ENCODE measurements at regions of chr19 and their contacts with region 1.

Region 1: DNA sequence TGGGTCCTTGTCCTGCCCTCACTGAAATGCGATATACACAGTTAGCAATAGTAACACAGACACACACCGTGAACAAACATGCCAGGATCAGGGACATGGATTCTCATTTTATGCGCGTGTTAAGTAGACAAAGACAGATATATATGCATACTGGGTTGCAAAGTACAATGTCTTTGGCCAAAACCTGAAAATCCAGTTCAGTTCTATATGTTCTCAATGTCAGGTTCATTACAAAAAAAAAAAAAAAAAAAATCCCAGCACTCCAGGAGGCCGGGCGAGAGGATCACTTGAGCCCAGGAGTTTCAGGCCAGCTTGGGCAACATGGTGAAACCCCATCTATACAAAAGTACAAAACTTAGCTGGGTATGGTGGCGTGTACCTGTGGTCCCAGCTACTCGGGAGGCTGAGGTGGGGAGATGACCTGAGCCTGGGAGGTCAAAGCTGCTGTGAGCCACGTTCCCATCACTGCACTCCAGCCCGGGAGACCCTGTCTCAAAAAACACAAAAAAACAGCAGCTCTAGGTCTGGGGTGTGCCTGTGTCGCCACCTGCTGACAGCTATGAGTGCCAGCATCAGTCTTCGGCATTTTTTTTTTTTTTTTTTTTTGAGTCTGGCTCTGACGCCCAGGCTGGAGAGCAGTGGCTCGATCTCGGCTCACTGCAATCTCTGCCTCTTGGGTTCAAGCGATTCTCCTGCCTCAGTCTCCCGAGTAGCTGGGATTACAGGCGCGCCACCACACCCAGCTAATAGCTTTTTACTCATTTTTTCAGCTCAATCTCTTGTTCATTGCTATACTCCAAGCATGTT is 10.3 kb downstream of the AP2S1 start:
- DNase-seq: peak in 32 of 35 experiments; percentile 14 to 84 (median 44)
- ATAC-seq: peak; percentile 64 to 87 (median 72)
- H3K4me3 ChIP-seq: no peak overlapping the region
- H3K4me3 Mint-ChIP-seq: no peak overlapping the region
- H3K27ac ChIP-seq: no peak overlapping the region
- H3K27ac Mint-ChIP-seq: peak overlapping the region in 1 of 2 donors; percentile 23
- H3K4me1 ChIP-seq: peaks cover 0 to 7% of the 10 kb centered on the region in 2 experiments
- H3K4me1 Mint-ChIP-seq: peaks cover 0 to 6% (median 3%) of the 10 kb centered on the region in 3 donors
- H3K27me3 ChIP-seq: no peaks in the 10 kb centered on the region
- H3K27me3 Mint-ChIP-seq: no peaks in the 10 kb centered on the region

Region 2: DNA sequence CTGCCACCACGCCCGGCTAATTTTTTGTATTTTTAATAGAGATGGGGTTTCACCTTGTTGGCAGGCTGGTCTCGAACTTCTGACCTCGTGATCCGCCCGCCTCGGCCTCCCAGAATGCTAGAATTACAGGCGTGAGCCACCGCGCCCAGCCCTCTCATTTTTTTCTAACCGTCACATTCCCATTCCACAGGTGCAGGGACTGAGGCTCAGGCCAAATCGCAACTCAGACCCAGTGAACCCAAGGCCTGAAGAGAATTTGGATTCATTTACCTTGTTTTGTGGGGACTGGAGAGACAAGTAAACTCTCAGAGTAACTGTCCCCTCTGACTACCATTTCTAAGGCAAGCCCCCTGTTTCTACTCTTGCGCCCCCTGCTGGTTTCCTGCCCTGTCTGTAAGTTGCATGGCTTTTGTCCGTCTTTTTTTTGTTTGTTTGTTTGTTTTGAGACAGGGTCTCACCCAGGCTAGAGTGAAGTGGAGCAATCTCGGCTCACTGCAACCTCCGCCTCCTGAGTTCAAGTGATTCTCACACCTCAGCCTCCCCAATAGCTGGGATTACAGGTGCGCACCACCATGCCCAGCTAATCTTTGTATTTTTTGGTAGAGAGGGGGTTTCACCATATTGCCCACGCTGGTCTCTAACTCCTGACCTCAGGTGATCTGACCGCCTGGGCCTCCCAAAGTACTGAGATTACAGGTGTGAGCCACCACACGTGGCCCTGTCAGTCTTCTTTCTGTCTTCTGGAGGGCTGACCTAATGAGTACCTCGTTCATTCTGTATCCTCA is 91.8 kb before region 1 on chr19:
- CTCF ChIA-PET with region 1: interaction called in 1 of 2 experiments, 15 read pairs
- POLR2A ChIA-PET with region 1: no interaction called
- DNase-seq: peak in 34 of 35 experiments; percentile 35 to 81 (median 66)
- ATAC-seq: no peak
- H3K4me3 ChIP-seq: no peak overlapping the region
- H3K4me3 Mint-ChIP-seq: peak overlapping the region; percentile 67 to 83 (median 77)
- H3K27ac ChIP-seq: no peak overlapping the region
- H3K27ac Mint-ChIP-seq: peak overlapping the region; percentile 0 to 61
- H3K4me1 ChIP-seq: peaks cover 13 to 40% of the 10 kb centered on the region in 2 experiments
- H3K4me1 Mint-ChIP-seq: peaks cover 35 to 39% (median 37%) of the 10 kb centered on the region in 3 donors
- H3K27me3 ChIP-seq: no peaks in the 10 kb centered on the region
- H3K27me3 Mint-ChIP-seq: no peaks in the 10 kb centered on the region

Region 3: DNA sequence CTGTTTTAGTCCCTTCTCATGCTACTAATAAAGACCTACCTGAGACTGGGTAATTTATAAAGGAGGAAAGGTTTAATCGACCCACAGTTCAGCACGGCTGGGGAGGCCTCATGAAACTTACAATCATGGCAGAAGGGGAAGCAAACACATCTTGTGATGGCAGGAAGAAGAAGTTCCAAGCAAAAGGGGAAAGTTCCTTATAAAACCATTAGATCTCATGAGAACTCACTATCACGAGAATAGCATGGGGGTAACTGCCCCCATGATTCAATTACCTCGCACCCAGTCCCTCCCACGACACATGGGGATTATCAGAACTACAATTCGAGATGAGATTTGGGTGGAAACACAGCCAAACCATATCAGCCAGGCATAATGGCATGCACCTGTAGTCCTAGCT is 81.1 kb before region 1 on chr19:
- CTCF ChIA-PET with region 1: interaction called, 20 to 35 read pairs
- POLR2A ChIA-PET with region 1: interaction called in 1 of 2 experiments, 5 read pairs
- DNase-seq: no peak
- ATAC-seq: no peak
- H3K4me3 ChIP-seq: no peak overlapping the region
- H3K4me3 Mint-ChIP-seq: no peak overlapping the region
- H3K27ac ChIP-seq: no peak overlapping the region
- H3K27ac Mint-ChIP-seq: no peak overlapping the region
- H3K4me1 ChIP-seq: peaks cover 0 to 12% of the 10 kb centered on the region in 2 experiments
- H3K4me1 Mint-ChIP-seq: peaks cover 2 to 4% (median 4%) of the 10 kb centered on the region in 3 donors
- H3K27me3 ChIP-seq: no peaks in the 10 kb centered on the region
- H3K27me3 Mint-ChIP-seq: no peaks in the 10 kb centered on the region

Region 4: GRCh38 chr19:46821498-46822409 is 18.6 kb before region 1 on chr19:
- CTCF ChIA-PET with region 1: interaction called, 4 to 10 read pairs
- POLR2A ChIA-PET with region 1: interaction called in 1 of 2 experiments, 4 read pairs
- DNase-seq: peak; percentile 36 to 79 (median 57)
- ATAC-seq: peak; percentile 83 to 93 (median 90)
- H3K4me3 ChIP-seq: peak overlapping the region in 1 of 2 donors; percentile 18
- H3K4me3 Mint-ChIP-seq: peak overlapping the region in 2 of 3 donors; percentile 21 to 70
- H3K27ac ChIP-seq: peak overlapping the region; percentile 82
- H3K27ac Mint-ChIP-seq: peak overlapping the region; percentile 90 to 95
- H3K4me1 ChIP-seq: peaks cover 15 to 40% of the 10 kb centered on the region in 2 experiments
- H3K4me1 Mint-ChIP-seq: peaks cover 32 to 46% (median 33%) of the 10 kb centered on the region in 3 donors
- H3K27me3 ChIP-seq: no peaks in the 10 kb centered on the region
- H3K27me3 Mint-ChIP-seq: no peaks in the 10 kb centered on the region

Region 5: GRCh38 chr19:46866387-46867152 is 26.2 kb after region 1 on chr19:
- CTCF ChIA-PET with region 1: no interaction called
- POLR2A ChIA-PET with region 1: no interaction called
- DNase-seq: no peak
- ATAC-seq: no peak
- H3K4me3 ChIP-seq: no peak overlapping the region
- H3K4me3 Mint-ChIP-seq: no peak overlapping the region
- H3K27ac ChIP-seq: no peak overlapping the region
- H3K27ac Mint-ChIP-seq: peak overlapping the region in 1 of 2 donors; percentile 56
- H3K4me1 ChIP-seq: peaks cover 17 to 49% of the 10 kb centered on the region in 2 experiments
- H3K4me1 Mint-ChIP-seq: peaks cover 7 to 37% (median 11%) of the 10 kb centered on the region in 3 donors
- H3K27me3 ChIP-seq: no peaks in the 10 kb centered on the region
- H3K27me3 Mint-ChIP-seq: no peaks in the 10 kb centered on the region

Measured in T-cell (primary cell).